Aorta (tissue), 5 donors: ENCODE measurements at regions of chr15 and their contacts with region 1.

Region 1: DNA sequence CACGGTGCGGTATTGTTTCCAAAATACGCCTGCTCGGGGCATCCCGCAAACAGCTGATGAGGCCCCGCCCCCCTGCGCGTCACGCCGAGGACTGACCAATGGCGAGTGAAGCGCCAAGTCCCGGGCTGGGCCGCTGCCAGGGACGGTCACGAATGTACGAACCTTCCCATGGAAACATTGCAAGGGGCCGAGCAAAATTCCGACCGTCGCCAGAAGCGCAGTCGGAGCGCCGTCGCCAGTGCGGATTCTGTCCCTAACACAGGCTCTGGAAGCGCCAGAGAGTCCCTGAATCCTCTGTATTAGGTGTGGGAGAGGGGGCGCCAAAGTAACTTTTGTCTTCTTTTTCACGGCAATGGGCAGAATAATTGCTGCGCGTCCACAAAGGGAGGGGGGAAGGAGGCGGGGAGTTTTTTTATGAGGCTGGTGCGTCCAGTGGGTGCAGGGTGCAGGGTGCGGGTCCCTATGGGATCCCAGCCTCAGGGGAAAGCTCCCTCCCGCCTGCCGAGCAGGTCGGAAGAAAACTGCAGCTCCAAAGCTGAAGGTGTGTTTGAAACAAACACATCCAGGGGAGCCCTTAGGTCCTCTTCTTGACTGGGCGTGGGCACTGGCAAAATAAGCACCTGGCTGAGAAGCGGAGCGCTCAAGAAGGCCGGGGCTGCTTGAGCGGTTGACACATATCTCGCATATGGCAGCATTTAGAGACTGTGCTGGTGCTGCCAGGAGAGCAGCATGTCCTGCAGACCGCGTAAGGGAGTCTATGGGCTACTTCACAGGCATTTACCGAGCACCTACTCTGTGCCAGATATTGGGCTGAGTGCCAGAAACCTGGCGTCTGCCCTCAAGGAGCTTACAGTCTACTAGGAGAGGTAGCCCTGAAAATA is at the start of gene BMF:
- DNase-seq: peak; percentile 100
- ATAC-seq: peak; percentile 86
- H3K4me3 ChIP-seq: peak within 1 kb of the TSS; percentile 81 to 87
- H3K27ac ChIP-seq: peak within 1 kb of the TSS; percentile 14 to 38
- H3K4me1 ChIP-seq: peaks cover 0 to 4% of the 10 kb centered on the region in 2 donors
- H3K27me3 ChIP-seq: no peaks in the 10 kb centered on the region
- total RNA-seq, gene BMF: 6.0 to 17.3 TPM

Region 2: GRCh38 chr15:40044717-40045571 is 64.2 kb before region 1 on chr15:
- intact Hi-C with region 1: loop called (anchors 2 to 5 kb)
- DNase-seq: peak; percentile 94 to 95
- ATAC-seq: peak; percentile 93
- H3K4me3 ChIP-seq: no peak overlapping the region
- H3K27ac ChIP-seq: no peak overlapping the region
- H3K4me1 ChIP-seq: no peaks in the 10 kb centered on the region
- H3K27me3 ChIP-seq: no peaks in the 10 kb centered on the region

Region 3: GRCh38 chr15:40069178-40070165 is 39.6 kb before region 1 on chr15:
- intact Hi-C with region 1: loop called in 1 of 2 experiments (anchors 2 kb)
- DNase-seq: peak; percentile 95 to 97
- ATAC-seq: peak; percentile 96
- H3K4me3 ChIP-seq: no peak overlapping the region
- H3K27ac ChIP-seq: peak overlapping the region in 1 of 2 donors; percentile 20
- H3K4me1 ChIP-seq: peaks cover 0 to 4% of the 10 kb centered on the region in 2 donors
- H3K27me3 ChIP-seq: no peaks in the 10 kb centered on the region

Region 4: DNA sequence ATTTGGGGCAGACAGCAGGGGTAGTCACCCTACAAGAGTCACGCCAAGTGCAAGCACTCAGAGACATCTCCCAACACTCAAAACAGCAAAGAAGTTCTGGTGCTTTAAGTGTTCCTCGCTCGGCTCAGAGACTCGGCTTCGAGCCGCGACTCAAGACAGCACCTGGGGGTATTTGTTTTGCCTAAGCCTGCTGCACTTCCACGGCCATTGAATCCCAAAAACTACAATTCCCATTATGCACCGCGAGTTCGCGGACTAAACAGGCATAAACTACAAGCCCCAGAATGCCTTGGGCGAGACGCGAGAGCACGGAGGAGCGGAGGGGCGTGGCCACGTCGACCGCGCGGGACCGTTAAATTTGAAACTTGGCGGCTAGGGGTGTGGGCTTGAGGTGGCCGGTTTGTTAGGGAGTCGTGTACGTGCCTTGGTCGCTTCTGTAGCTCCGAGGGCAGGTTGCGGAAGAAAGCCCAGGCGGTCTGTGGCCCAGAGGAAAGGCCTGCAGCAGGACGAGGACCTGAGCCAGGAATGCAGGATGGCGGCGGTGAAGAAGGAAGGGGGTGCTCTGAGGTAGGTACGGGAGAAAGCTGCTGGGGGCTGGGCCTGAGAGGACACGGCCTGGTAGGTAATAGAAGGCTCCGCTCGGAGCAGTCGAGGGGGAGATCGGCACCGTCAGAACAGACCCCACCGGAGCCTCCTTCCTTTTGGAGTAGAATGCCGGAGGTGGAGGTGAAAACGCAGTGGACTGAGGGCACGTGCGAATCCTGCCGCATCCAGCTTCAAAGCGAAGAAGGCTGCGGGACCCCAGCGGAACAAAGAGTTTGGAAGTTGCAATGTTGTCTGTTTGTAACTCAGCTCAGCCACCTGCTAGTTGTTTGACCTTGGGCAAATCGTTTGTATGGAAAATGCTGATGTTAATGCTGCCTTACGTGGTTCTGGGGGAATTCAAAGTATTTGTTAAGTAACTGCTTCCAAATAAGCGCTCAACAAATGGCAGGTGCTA is 51.9 kb after region 1 on chr15 and contains the start of gene BUB1B:
- intact Hi-C with region 1: loop called (anchors 2 to 5 kb)
- DNase-seq: peak; percentile 94 to 96
- ATAC-seq: peak; percentile 96
- H3K4me3 ChIP-seq: peak within 1 kb of the TSS in 1 of 2 donors; percentile 2
- H3K27ac ChIP-seq: no peak within 1 kb of the TSS
- H3K4me1 ChIP-seq: no peaks in the 10 kb centered on the region
- H3K27me3 ChIP-seq: no peaks in the 10 kb centered on the region
- total RNA-seq, gene BUB1B: 0.84 to 5.0 TPM